ENCODE measurements at regions of chr16 and their contacts with region 1.

Region 1: DNA sequence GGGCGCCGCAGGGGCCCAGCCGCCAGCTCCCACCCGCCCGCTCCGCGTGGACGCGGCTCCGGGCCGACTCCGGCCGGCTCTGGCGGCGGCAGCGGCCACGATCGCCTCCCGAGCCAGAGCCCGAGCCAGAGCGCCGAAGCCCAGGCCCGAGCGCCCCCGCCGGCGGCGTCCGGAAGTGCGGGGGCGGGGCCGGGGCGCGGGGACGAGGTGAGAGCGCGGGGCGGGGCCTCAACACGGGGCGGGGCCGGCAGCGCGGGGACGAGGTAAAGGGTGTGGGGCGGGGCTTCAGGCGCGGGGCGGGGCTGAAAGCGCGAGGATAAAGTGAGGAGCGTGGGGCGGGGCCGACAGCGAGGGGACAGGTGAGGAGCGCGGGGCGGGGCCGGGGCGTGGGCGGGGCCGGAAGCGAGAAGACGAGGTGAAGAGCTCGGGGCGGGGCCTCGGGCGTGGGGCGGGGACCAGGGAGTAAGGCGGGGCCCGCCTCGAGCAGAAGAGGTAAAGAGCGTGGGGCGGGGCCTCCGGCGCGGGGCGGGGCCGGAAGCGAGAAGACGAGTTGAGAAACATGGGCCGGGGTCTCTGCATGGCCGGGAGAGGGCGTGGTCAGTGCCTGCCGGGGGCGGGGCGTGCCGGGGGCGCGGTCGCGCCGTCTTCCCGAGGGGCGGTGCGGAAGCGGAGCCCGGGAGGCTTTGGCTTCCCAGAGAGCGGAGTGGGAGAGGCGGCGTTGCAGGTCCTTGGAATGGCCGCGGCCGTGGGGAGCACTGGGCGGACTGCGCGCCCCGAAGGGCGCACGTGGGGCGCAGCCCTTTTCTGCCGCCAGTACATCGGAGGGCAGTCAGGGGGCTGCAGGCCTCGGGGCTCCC is at the start of gene AXIN1:
- DNase-seq: peak; percentile 64
- ATAC-seq: peak; percentile 82
- H3K4me3 ChIP-seq: peak within 1 kb of the TSS; percentile 96
- H3K27ac ChIP-seq: peak within 1 kb of the TSS; percentile 48
- H3K4me1 ChIP-seq: peaks cover 20% of the 10 kb centered on the region
- H3K27me3 ChIP-seq: no peaks in the 10 kb centered on the region
- CTCF ChIP-seq: peak; percentile 29 to 57 (median 55); a peak in 4 of 6 replicates
- EP300 ChIP-seq: no peak
- POLR2A ChIP-seq: peak; percentile 79
- RAD21 ChIP-seq: peak; percentile 66
- polyA plus RNA-seq, gene AXIN1: 0.26 to 0.68 TPM

Region 2: DNA sequence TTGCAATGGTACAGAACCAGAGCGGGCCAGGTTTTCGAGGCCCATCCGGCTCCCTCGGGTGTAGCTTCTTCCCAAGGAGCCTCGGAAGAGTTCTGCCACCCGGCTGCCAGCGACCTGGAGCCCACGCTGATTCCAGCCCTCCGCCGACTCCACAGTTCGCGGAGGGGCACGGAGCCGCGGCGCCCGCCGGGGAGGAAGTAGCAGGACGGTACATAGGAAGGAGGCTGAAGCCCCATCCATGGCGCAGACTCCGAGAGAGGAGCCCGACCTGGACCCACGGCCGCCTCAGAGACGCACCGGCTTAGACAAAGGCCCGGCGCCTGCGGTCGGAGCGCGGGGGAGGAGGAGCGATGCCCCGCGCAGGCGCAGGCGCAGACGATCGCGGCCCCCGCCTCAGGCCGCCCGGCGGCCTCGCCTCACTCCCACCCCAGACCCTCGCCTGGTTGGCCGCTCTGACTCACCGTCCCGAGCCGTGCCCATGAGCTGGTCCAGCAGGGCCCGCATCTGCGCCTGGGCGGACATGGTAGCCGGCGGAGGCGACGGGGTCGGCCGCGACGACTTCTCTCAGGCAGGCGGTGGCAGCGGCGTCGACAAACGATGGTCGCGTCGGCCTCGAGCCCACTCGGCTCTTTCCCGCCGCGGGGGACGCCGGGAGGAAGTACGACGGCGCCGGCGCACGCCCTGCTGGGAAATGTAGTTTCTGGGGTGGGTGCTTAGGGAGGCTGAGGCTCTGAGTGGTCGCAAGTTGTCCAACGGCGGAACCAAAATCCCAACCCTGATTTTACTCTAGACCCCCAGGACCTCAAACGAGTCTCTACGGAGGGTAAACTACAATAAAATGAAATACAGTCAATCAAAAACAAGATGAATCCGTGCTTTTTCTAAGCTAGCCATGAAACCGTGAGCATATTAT is 123.7 kb before region 1 on chr16 and contains the start of gene LUC7L:
- CTCF ChIA-PET with region 1: interaction called, 20 read pairs
- POLR2A ChIA-PET with region 1: interaction called, 11 read pairs
- RAD21 ChIA-PET with region 1: interaction called, 28 read pairs
- SMC1A ChIA-PET with region 1: interaction called, 11 read pairs
- in situ Hi-C with region 1: loop called (anchors 5 kb)
- intact Hi-C with region 1: loop called (anchors 2 kb)
- DNase-seq: peak; percentile 40
- ATAC-seq: peak; percentile 97
- H3K4me3 ChIP-seq: peak within 1 kb of the TSS; percentile 82
- H3K27ac ChIP-seq: peak within 1 kb of the TSS; percentile 79
- H3K4me1 ChIP-seq: peaks cover 8% of the 10 kb centered on the region
- H3K27me3 ChIP-seq: no peaks in the 10 kb centered on the region
- CTCF ChIP-seq: no peak
- EP300 ChIP-seq: no peak
- POLR2A ChIP-seq: peak; percentile 100
- RAD21 ChIP-seq: no peak
- polyA plus RNA-seq, gene LUC7L: 2.3 to 10.9 TPM

Region 3: DNA sequence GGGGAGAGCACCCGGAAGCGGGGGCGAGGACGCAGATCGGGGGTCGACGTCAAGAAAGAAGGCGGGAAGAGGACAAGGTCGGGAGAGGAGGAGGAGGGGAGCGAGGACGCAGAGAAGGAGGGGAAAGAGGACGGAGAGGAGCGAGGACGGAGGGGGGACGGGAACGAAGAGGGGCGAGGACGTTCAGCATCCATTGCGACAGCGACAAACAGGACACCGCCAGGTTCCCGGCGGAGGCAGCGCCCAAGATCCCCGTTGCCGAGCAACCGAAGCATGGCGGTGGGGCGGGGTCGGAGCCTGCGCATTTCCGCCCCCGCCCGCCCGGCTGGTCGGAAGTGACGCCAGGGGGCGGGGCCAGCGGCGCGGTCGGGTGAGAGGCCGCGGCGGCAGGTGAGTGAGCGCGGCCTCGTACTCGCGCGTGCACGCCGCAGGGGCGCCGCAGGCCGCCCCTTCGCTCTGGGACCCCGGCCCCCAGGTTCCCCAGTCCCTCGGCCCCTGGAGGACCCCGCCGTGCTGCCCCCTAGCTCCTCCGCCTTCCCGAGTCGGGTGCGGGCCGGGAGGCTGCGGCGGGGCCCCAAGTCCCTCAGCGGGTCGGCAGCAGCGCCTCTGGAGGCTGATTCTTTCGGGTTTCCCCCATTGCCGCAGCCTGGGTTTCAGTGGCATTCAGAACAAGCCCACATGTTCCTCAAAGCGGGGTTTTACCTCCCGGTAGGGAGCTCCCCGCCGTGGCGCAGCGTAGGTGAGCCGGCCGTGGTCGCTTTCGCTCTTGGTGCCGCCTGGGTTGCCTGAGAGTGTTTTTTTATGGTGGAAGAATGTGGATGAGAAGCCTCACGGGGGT is 118.1 kb before region 1 on chr16 and contains the start of gene FAM234A:
- CTCF ChIA-PET with region 1: interaction called, 20 read pairs
- POLR2A ChIA-PET with region 1: interaction called, 33 read pairs
- RAD21 ChIA-PET with region 1: interaction called, 28 read pairs
- SMC1A ChIA-PET with region 1: interaction called, 5 read pairs
- in situ Hi-C with region 1: loop called (anchors 5 kb)
- intact Hi-C with region 1: loop called (anchors 2 kb)
- DNase-seq: peak; percentile 77
- ATAC-seq: peak; percentile 96
- H3K4me3 ChIP-seq: peak within 1 kb of the TSS; percentile 81
- H3K27ac ChIP-seq: peak within 1 kb of the TSS; percentile 84
- H3K4me1 ChIP-seq: peaks cover 2% of the 10 kb centered on the region; the same call in 1 of the 2 replicates
- H3K27me3 ChIP-seq: no peaks in the 10 kb centered on the region
- CTCF ChIP-seq: peak; percentile 37 to 62 (median 55)
- EP300 ChIP-seq: 0 out of 4 replicates have a peak, but pooled peaks of 1 of the 2 experiments have one; percentile 14
- POLR2A ChIP-seq: peak; percentile 87
- RAD21 ChIP-seq: 0 out of 2 replicates have a peak, but pooled peaks have one; percentile 16
- polyA plus RNA-seq, gene FAM234A: 1.6 TPM

Region 4: GRCh38 chr16:301950-302349 is 50.8 kb before region 1 on chr16:
- CTCF ChIA-PET with region 1: no interaction called
- POLR2A ChIA-PET with region 1: no interaction called
- RAD21 ChIA-PET with region 1: no interaction called
- SMC1A ChIA-PET with region 1: no interaction called
- in situ Hi-C with region 1: no loop called
- intact Hi-C with region 1: no loop called
- DNase-seq: no peak
- ATAC-seq: no peak
- H3K4me3 ChIP-seq: no peak overlapping the region
- H3K27ac ChIP-seq: no peak overlapping the region
- H3K4me1 ChIP-seq: no peaks in the 10 kb centered on the region
- H3K27me3 ChIP-seq: no peaks in the 10 kb centered on the region
- CTCF ChIP-seq: no peak
- EP300 ChIP-seq: no peak
- POLR2A ChIP-seq: no peak
- RAD21 ChIP-seq: no peak

Region 5: GRCh38 chr16:370443-370842 is 17.7 kb after region 1 on chr16 and contains the start of gene MRPL28:
- CTCF ChIA-PET with region 1: no interaction called
- POLR2A ChIA-PET with region 1: interaction called, 10 read pairs
- RAD21 ChIA-PET with region 1: no interaction called
- SMC1A ChIA-PET with region 1: no interaction called
- in situ Hi-C with region 1: no loop called
- intact Hi-C with region 1: no loop called
- DNase-seq: peak; percentile 87
- ATAC-seq: peak; percentile 99
- H3K4me3 ChIP-seq: peak within 1 kb of the TSS; percentile 65
- H3K27ac ChIP-seq: peak within 1 kb of the TSS; percentile 61
- H3K4me1 ChIP-seq: peaks cover 4% of the 10 kb centered on the region; the same call in 1 of the 2 replicates
- H3K27me3 ChIP-seq: no peaks in the 10 kb centered on the region
- CTCF ChIP-seq: no peak
- EP300 ChIP-seq: no peak
- POLR2A ChIP-seq: peak; percentile 44
- RAD21 ChIP-seq: no peak
- polyA plus RNA-seq, gene MRPL28: 1.6 to 17.9 TPM

Region 6: GRCh38 chr16:392450-393030 is 39.8 kb after region 1 on chr16:
- CTCF ChIA-PET with region 1: no interaction called
- POLR2A ChIA-PET with region 1: no interaction called
- RAD21 ChIA-PET with region 1: no interaction called
- SMC1A ChIA-PET with region 1: no interaction called
- in situ Hi-C with region 1: no loop called
- intact Hi-C with region 1: no loop called
- DNase-seq: no peak
- ATAC-seq: no peak
- H3K4me3 ChIP-seq: no peak overlapping the region
- H3K27ac ChIP-seq: no peak overlapping the region
- H3K4me1 ChIP-seq: peaks cover 8% of the 10 kb centered on the region; the same call in 1 of the 2 replicates
- H3K27me3 ChIP-seq: no peaks in the 10 kb centered on the region
- CTCF ChIP-seq: no peak
- EP300 ChIP-seq: no peak
- POLR2A ChIP-seq: no peak
- RAD21 ChIP-seq: no peak

Region 7: GRCh38 chr16:410516-411178 is 57.9 kb after region 1 on chr16:
- CTCF ChIA-PET with region 1: no interaction called
- POLR2A ChIA-PET with region 1: no interaction called
- RAD21 ChIA-PET with region 1: no interaction called
- SMC1A ChIA-PET with region 1: no interaction called
- in situ Hi-C with region 1: no loop called
- intact Hi-C with region 1: no loop called
- DNase-seq: no peak
- ATAC-seq: no peak
- H3K4me3 ChIP-seq: no peak overlapping the region
- H3K27ac ChIP-seq: no peak overlapping the region
- H3K4me1 ChIP-seq: no peaks in the 10 kb centered on the region
- H3K27me3 ChIP-seq: no peaks in the 10 kb centered on the region
- CTCF ChIP-seq: no peak
- EP300 ChIP-seq: no peak
- POLR2A ChIP-seq: no peak; the same call in 1 of the 2 replicates
- RAD21 ChIP-seq: no peak

Region 8: GRCh38 chr16:471353-472198 is 118.8 kb after region 1 on chr16:
- CTCF ChIA-PET with region 1: no interaction called
- POLR2A ChIA-PET with region 1: no interaction called
- RAD21 ChIA-PET with region 1: no interaction called
- SMC1A ChIA-PET with region 1: no interaction called
- in situ Hi-C with region 1: no loop called
- intact Hi-C with region 1: no loop called
- DNase-seq: no peak
- ATAC-seq: no peak
- H3K4me3 ChIP-seq: no peak overlapping the region
- H3K27ac ChIP-seq: no peak overlapping the region
- H3K4me1 ChIP-seq: no peaks in the 10 kb centered on the region
- H3K27me3 ChIP-seq: no peaks in the 10 kb centered on the region
- CTCF ChIP-seq: no peak
- EP300 ChIP-seq: no peak
- POLR2A ChIP-seq: no peak
- RAD21 ChIP-seq: no peak